Endothelial cell of umbilical vein (primary cell): ENCODE measurements at regions of chr11 and their contacts with region 1.

Region 1: GRCh38 chr11:65888163-65888814 is at the start of gene FIBP:
- DNase-seq: peak; percentile 97
- H3K4me3 ChIP-seq: peak within 1 kb of the TSS; percentile 34 to 66 (median 64)
- H3K27ac ChIP-seq: peak within 1 kb of the TSS; percentile 99
- H3K4me1 ChIP-seq: peaks cover 43% of the 10 kb centered on the region
- H3K27me3 ChIP-seq: no peaks in the 10 kb centered on the region
- CTCF ChIP-seq: peak; percentile 80 to 91
- POLR2A ChIP-seq: peak; percentile 99
- total RNA-seq, gene FIBP: 88.5 and 105 TPM in 2 replicates

Region 2: DNA sequence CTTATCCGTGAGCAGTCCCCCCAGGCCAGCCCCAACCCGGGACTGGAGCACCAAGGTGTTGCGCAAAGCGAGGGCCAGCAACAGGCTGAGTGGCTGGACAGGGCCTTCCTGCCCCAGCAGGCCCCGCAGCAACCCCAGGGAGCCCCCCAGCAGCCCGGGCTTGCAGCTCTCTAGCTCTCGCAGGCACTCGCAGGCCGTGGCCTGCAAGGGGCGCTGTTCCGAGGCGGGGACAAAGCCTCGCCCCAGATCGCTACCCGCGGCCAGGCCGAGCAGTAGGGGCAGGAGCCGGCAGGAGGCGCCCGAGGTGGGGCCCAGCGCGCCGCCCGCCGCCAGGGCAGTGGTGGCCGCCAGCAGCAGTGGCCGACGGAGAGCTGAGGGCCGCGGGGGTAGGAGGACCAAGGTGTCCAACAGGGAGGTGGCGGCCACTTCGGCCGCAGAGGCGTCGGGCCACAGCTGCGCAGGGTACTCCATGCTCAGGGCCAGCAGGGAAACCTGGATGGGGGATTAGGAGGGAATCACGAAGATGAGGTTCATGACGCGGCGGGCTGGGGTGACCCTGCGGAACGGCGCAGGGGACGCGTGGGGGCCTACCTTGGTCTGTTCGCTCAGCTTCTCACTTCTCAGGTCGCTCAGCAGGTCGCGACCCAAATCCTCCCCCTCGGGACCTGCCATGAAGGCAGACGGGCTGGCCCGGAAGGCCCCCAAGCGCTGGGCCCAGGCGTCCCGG is 108.3 kb before region 1 on chr11:
- CTCF ChIA-PET with region 1: interaction called, 34 read pairs
- POLR2A ChIA-PET with region 1: no interaction called
- dilution Hi-C with region 1: no loop called
- intact Hi-C with region 1: no loop called
- DNase-seq: peak; percentile 85
- H3K4me3 ChIP-seq: peak overlapping the region; percentile 55 to 74 (median 73)
- H3K27ac ChIP-seq: peak overlapping the region; percentile 81
- H3K4me1 ChIP-seq: peaks cover 5% of the 10 kb centered on the region
- H3K27me3 ChIP-seq: peaks cover under 1 to 2% of the 10 kb centered on the region in 2 experiments
- CTCF ChIP-seq: peak; percentile 96 to 99
- POLR2A ChIP-seq: no peak

Region 3: GRCh38 chr11:65868076-65868667 is 20.1 kb before region 1 on chr11:
- CTCF ChIA-PET with region 1: interaction called, 31 read pairs
- POLR2A ChIA-PET with region 1: interaction called, 11 read pairs
- dilution Hi-C with region 1: no loop called
- intact Hi-C with region 1: loop called (anchors 2 kb)
- DNase-seq: no peak
- H3K4me3 ChIP-seq: no peak overlapping the region
- H3K27ac ChIP-seq: no peak overlapping the region
- H3K4me1 ChIP-seq: peaks cover 16% of the 10 kb centered on the region
- H3K27me3 ChIP-seq: no peaks in the 10 kb centered on the region
- CTCF ChIP-seq: no peak
- POLR2A ChIP-seq: no peak

Region 4: GRCh38 chr11:65911682-65912568 is 23.6 kb after region 1 on chr11:
- CTCF ChIA-PET with region 1: interaction called, 73 read pairs
- POLR2A ChIA-PET with region 1: interaction called, 28 read pairs
- dilution Hi-C with region 1: no loop called
- intact Hi-C with region 1: loop called (anchors 1 kb)
- DNase-seq: peak; percentile 58
- H3K4me3 ChIP-seq: no peak overlapping the region
- H3K27ac ChIP-seq: peak overlapping the region; percentile 74
- H3K4me1 ChIP-seq: peaks cover 46% of the 10 kb centered on the region
- H3K27me3 ChIP-seq: no peaks in the 10 kb centered on the region
- CTCF ChIP-seq: peak in 1 of 2 donors; percentile 17
- POLR2A ChIP-seq: no peak

Region 5: DNA sequence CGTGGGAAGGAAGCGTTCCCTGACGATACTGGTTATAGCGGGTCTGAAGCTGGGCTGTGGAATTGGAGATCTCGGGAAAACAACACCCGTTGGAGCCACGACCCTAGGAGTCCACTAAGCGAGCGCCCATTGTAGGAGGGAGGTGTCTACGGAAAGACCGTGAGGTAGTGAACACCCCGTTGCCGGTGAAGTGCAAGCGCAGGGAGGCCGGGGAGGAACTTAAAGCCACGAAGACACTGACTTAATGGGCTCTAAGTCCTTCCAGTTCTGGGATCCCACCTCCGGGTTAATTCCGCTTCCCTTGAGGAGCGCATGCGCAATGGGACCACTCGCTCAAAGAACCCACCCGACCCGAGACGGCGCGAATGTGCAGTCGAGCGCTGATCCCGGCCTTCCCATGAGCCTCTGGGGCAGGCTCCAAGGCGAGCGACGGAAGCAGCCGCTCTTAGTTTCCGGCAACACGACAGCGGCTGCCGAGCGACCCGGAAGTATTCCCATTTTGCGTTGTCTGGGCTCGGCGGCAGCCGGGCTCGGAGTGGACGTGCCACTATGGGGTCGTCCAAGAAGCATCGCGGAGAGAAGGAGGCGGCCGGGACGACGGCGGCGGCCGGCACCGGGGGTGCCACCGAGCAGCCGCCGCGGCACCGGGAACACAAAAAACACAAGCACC is 73.1 kb after region 1 on chr11 and contains the start of gene SART1:
- CTCF ChIA-PET with region 1: interaction called, 8 read pairs
- POLR2A ChIA-PET with region 1: interaction called, 3 read pairs
- dilution Hi-C with region 1: no loop called
- intact Hi-C with region 1: loop called (anchors 1 kb)
- DNase-seq: peak; percentile 99
- H3K4me3 ChIP-seq: peak within 1 kb of the TSS; percentile 79 to 98 (median 90)
- H3K27ac ChIP-seq: peak within 1 kb of the TSS; percentile 78
- H3K4me1 ChIP-seq: peaks cover 11% of the 10 kb centered on the region
- H3K27me3 ChIP-seq: no peaks in the 10 kb centered on the region
- CTCF ChIP-seq: no peak
- POLR2A ChIP-seq: peak; percentile 98
- total RNA-seq, gene SART1: 58.9 and 62.7 TPM in 2 replicates

Region 6: GRCh38 chr11:66022401-66023185 is 134.3 kb after region 1 on chr11:
- CTCF ChIA-PET with region 1: interaction called, 34 read pairs
- POLR2A ChIA-PET with region 1: no interaction called
- dilution Hi-C with region 1: no loop called
- intact Hi-C with region 1: no loop called
- DNase-seq: peak; percentile 67
- H3K4me3 ChIP-seq: no peak overlapping the region
- H3K27ac ChIP-seq: no peak overlapping the region
- H3K4me1 ChIP-seq: peaks cover 17% of the 10 kb centered on the region
- H3K27me3 ChIP-seq: no peaks in the 10 kb centered on the region
- CTCF ChIP-seq: peak; percentile 97 to 98
- POLR2A ChIP-seq: no peak